Mammary epithelial cell (primary cell): ENCODE measurements at regions of chr3 and their contacts with region 1.

Region 1: GRCh38 chr3:37197810-37198371 is 23.5 kb upstream of the LRRFIP2 start:
- DNase-seq: peak; percentile 73
- H3K4me3 ChIP-seq: no peak overlapping the region
- H3K27ac ChIP-seq: peak overlapping the region; percentile 89
- H3K4me1 ChIP-seq: peaks cover 30% of the 10 kb centered on the region
- H3K27me3 ChIP-seq: no peaks in the 10 kb centered on the region
- CTCF ChIP-seq: no peak

Region 2: DNA sequence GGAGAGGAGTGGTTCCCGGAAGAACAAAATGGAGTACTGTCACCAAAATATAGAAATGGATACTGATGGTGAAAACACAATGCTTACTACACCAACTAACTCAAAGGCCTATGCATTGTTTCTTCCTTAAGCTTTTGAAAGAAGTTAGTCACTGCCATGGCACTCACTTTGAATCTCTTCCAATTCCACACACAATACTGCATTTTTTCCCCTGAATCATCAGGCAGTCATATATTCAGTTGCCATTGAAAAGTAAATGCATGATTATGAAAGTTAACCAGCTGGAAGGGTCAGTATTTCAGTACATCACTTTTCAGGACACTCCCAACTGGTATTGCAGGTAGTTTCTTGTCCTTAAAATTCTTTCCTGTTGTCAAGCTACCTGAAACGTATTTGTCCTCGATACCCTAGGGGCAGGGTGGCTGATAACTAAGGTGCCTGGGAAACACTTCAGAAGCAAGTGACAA is 14.5 kb before region 1 on chr3:
- CTCF ChIA-PET with region 1: no interaction called
- dilution Hi-C with region 1: no loop called
- in situ Hi-C with region 1: no loop called
- intact Hi-C with region 1: loop called (anchors 2 kb)
- DNase-seq: peak; percentile 98
- H3K4me3 ChIP-seq: no peak overlapping the region
- H3K27ac ChIP-seq: peak overlapping the region; percentile 95
- H3K4me1 ChIP-seq: peaks cover 55% of the 10 kb centered on the region
- H3K27me3 ChIP-seq: no peaks in the 10 kb centered on the region
- CTCF ChIP-seq: no peak

Region 3: GRCh38 chr3:37227870-37228549 is 30.1 kb after region 1 on chr3:
- CTCF ChIA-PET with region 1: no interaction called
- dilution Hi-C with region 1: no loop called
- in situ Hi-C with region 1: no loop called
- intact Hi-C with region 1: no loop called
- DNase-seq: no peak
- H3K4me3 ChIP-seq: no peak overlapping the region
- H3K27ac ChIP-seq: no peak overlapping the region
- H3K4me1 ChIP-seq: peaks cover 8% of the 10 kb centered on the region
- H3K27me3 ChIP-seq: no peaks in the 10 kb centered on the region
- CTCF ChIP-seq: no peak